ENCODE measurements at regions of chr15 and their contacts with region 1.

Region 1: DNA sequence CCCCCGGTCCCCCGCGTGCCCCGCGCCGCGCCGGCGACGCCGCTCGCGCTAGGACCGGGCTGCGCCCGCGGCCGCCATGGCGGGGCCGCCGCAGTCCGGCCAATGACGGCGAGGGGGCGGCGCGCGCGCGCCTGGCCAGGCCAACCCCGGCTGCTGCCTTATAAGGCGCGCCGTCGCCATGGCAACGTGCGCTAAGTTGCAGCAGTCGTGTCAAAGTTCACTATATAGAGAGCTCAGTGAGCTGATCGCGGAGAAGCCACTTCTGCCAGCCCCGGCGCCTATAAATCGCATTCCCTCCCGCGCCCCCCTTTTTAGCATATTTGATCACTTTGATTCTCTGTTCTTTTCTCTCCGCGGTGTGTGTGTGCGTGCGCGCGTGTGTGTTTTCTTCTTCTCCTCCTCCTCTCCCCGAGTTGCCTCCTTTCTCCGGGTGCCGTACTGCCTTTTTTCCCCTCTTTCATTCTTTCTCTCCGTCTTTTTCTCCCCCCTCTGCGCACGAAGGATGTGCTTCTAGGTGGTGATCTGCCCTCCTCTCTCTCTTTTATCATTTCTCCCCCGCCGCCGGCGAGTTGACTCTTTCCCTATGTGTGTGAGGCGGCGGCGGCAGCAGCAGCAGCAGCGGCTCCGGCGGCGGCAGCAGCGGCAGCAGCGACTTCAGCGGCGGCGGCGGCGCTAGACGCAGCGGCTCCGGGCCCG is at the start of gene NR2F2:
- DNase-seq: peak; percentile 94
- ATAC-seq: peak; percentile 76
- H3K4me3 ChIP-seq: peak within 1 kb of the TSS; percentile 71 to 86
- H3K27ac ChIP-seq: peak within 1 kb of the TSS; percentile 98
- H3K4me1 ChIP-seq: peaks cover 32 to 54% of the 10 kb centered on the region in 2 experiments
- H3K27me3 ChIP-seq: no peaks in the 10 kb centered on the region
- CTCF ChIP-seq: no peak
- POLR2A ChIP-seq: peak; percentile 87
- RAD21 ChIP-seq: no peak; the same call in 1 of the 2 replicates
- total RNA-seq, gene NR2F2: 61.4 TPM

Region 2: GRCh38 chr15:95557226-95558046 is 773.2 kb before region 1 on chr15:
- CTCF ChIA-PET with region 1: no interaction called
- POLR2A ChIA-PET with region 1: no interaction called
- RAD21 ChIA-PET with region 1: no interaction called
- intact Hi-C with region 1: loop called (anchors 5 kb)
- DNase-seq: peak; percentile 83
- ATAC-seq: peak; percentile 86
- H3K4me3 ChIP-seq: peak overlapping the region in 1 of 2 experiments; percentile 41; a peak in 2 of 4 replicates
- H3K27ac ChIP-seq: peak overlapping the region; percentile 30
- H3K4me1 ChIP-seq: peaks cover 29 to 41% of the 10 kb centered on the region in 2 experiments
- H3K27me3 ChIP-seq: no peaks in the 10 kb centered on the region
- CTCF ChIP-seq: no peak
- POLR2A ChIP-seq: no peak
- RAD21 ChIP-seq: peak; percentile 15; the same call in 1 of the 2 replicates

Region 3: GRCh38 chr15:96053031-96053780 is 277.4 kb before region 1 on chr15:
- CTCF ChIA-PET with region 1: interaction called, 5 read pairs
- POLR2A ChIA-PET with region 1: no interaction called
- RAD21 ChIA-PET with region 1: interaction called in 1 of 2 experiments, 4 read pairs
- intact Hi-C with region 1: loop called (anchors 5 kb)
- DNase-seq: peak; percentile 16
- ATAC-seq: peak; percentile 80
- H3K4me3 ChIP-seq: peak overlapping the region; percentile 19 to 39
- H3K27ac ChIP-seq: peak overlapping the region; percentile 20
- H3K4me1 ChIP-seq: peaks cover 17 to 24% of the 10 kb centered on the region in 2 experiments; a peak in 3 of 4 replicates
- H3K27me3 ChIP-seq: no peaks in the 10 kb centered on the region
- CTCF ChIP-seq: no peak
- POLR2A ChIP-seq: no peak
- RAD21 ChIP-seq: 0 out of 2 replicates have a peak, but pooled peaks have one; percentile 5

Region 4: GRCh38 chr15:96170979-96171739 is 159.4 kb before region 1 on chr15:
- CTCF ChIA-PET with region 1: no interaction called
- POLR2A ChIA-PET with region 1: no interaction called
- RAD21 ChIA-PET with region 1: no interaction called
- intact Hi-C with region 1: no loop called
- DNase-seq: no peak
- ATAC-seq: no peak
- H3K4me3 ChIP-seq: no peak overlapping the region
- H3K27ac ChIP-seq: no peak overlapping the region
- H3K4me1 ChIP-seq: no peaks in the 10 kb centered on the region; a peak in 1 of 4 replicates
- H3K27me3 ChIP-seq: no peaks in the 10 kb centered on the region
- CTCF ChIP-seq: no peak
- POLR2A ChIP-seq: no peak
- RAD21 ChIP-seq: no peak

Region 5: DNA sequence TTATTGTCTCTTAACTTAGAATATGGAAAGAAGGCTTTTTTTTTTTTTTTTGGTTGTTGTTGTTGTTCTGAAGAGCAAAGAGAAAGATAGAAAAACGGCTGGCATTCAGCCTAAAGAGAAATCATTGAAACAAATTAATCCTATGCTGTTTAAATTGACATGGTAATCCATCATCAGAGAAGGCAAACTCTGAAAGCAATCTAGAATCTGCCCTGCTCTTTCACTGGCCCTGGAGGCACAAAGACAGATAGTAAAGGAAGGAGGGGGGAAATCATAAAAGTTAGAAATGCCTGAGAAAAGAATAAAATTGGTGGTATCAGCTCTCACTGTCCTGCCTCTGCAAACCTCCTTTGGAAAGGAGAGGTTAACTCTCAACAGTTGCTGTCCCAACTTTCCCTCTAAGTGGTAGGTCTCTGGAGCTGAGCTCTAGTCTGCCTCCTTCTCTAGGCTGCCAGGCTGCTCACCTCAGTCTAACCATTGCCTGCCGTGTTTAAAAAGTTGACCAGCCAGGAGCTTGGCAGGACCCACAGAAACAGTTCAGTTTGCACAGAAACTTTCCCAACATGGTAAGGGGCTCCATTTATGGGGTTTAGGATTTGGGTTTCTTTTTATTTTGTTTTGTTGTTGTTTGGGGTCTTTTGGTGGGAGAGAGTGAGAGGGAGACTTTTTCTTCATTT is 13.5 kb before region 1 on chr15:
- CTCF ChIA-PET with region 1: interaction called, 10 read pairs
- POLR2A ChIA-PET with region 1: interaction called, 3 read pairs
- RAD21 ChIA-PET with region 1: no interaction called
- intact Hi-C with region 1: no loop called
- DNase-seq: no peak
- ATAC-seq: peak; percentile 46; the same call in 1 of the 2 replicates
- H3K4me3 ChIP-seq: no peak overlapping the region
- H3K27ac ChIP-seq: no peak overlapping the region
- H3K4me1 ChIP-seq: peaks cover 0 to 20% of the 10 kb centered on the region in 2 experiments; a peak in 2 of 4 replicates
- H3K27me3 ChIP-seq: no peaks in the 10 kb centered on the region
- CTCF ChIP-seq: no peak
- POLR2A ChIP-seq: no peak
- RAD21 ChIP-seq: no peak

Region 6: GRCh38 chr15:97234851-97235610 is 904.4 kb after region 1 on chr15:
- CTCF ChIA-PET with region 1: interaction called, 4 read pairs
- POLR2A ChIA-PET with region 1: no interaction called
- RAD21 ChIA-PET with region 1: no interaction called
- intact Hi-C with region 1: loop called (anchors 2 kb)
- DNase-seq: peak; percentile 15
- ATAC-seq: peak; percentile 79
- H3K4me3 ChIP-seq: no peak overlapping the region
- H3K27ac ChIP-seq: no peak overlapping the region
- H3K4me1 ChIP-seq: no peaks in the 10 kb centered on the region
- H3K27me3 ChIP-seq: no peaks in the 10 kb centered on the region
- CTCF ChIP-seq: peak; percentile 30 to 78 (median 72); a peak in 5 of 6 replicates
- POLR2A ChIP-seq: no peak
- RAD21 ChIP-seq: peak; percentile 73

Measured in HCT116 (cell line).